Caco-2 (cell line): ENCODE measurements at regions of chr18 and their contacts with region 1.

Region 1: GRCh38 chr18:11310476-11311086 is 161.2 kb upstream of the PIEZO2 start:
- DNase-seq: peak; percentile 51 to 73
- H3K4me3 ChIP-seq: no peak overlapping the region
- H3K4me3 Mint-ChIP-seq: no peak overlapping the region
- H3K27ac Mint-ChIP-seq: no peak overlapping the region
- H3K4me1 ChIP-seq: peaks cover 8% of the 10 kb centered on the region; the same call in 1 of the 2 replicates
- H3K4me1 Mint-ChIP-seq: peaks cover 8% of the 10 kb centered on the region
- H3K27me3 ChIP-seq: no peaks in the 10 kb centered on the region
- H3K27me3 Mint-ChIP-seq: no peaks in the 10 kb centered on the region
- CTCF ChIP-seq: peak; percentile 81 to 84

Region 2: DNA sequence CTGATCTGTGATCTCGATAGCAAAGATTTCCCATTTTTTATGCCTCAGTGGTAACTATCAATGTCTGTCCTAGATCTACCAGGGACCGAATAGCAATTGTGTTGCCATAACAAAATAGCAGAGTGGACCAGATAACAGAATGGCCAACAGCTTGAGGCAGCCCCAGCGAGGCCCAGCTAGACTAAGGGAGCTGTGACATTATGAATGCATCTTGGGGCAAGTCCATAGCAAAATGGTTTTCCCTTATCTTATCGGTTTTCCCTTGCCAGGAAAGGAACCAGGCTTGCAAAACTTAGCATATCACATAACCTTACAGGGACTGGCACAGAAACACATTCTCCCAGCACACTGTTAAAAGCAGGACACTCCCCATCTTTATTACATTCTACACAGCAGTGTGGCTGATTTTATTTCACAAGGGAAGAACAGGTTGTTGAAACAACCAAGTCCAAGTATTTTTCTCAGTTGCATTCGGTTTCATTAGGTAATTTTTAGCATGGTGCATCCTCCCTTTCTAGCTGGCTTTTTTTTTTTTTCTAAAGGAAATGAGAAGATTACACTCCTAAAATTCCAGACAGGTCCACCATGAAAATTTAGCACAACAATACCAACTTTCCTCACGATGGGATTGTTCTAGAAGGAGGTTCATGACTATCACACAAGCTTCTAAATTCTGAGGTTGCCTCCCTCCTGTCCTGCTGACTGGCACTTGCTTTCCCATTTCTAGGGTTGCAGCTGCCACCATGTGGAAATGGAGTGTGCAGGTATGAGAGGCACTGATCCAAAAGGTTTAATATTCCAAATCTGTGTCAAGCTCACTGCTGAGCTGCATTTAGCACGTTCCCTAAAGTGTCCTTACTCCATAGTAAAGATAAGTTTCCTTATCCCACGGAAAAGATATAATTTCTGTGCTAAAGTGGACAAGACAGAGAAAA is 201.8 kb after region 1 on chr18:
- CTCF ChIA-PET with region 1: interaction called, 12 read pairs
- POLR2A ChIA-PET with region 1: no interaction called
- intact Hi-C with region 1: loop called (anchors 1 kb)
- DNase-seq: peak; percentile 49 to 52
- H3K4me3 ChIP-seq: no peak overlapping the region
- H3K4me3 Mint-ChIP-seq: no peak overlapping the region
- H3K27ac Mint-ChIP-seq: no peak overlapping the region
- H3K4me1 ChIP-seq: peaks cover 4% of the 10 kb centered on the region; the same call in 1 of the 2 replicates
- H3K4me1 Mint-ChIP-seq: no peaks in the 10 kb centered on the region
- H3K27me3 ChIP-seq: no peaks in the 10 kb centered on the region
- H3K27me3 Mint-ChIP-seq: no peaks in the 10 kb centered on the region
- CTCF ChIP-seq: peak in 1 of 2 experiments; percentile 61

Region 3: DNA sequence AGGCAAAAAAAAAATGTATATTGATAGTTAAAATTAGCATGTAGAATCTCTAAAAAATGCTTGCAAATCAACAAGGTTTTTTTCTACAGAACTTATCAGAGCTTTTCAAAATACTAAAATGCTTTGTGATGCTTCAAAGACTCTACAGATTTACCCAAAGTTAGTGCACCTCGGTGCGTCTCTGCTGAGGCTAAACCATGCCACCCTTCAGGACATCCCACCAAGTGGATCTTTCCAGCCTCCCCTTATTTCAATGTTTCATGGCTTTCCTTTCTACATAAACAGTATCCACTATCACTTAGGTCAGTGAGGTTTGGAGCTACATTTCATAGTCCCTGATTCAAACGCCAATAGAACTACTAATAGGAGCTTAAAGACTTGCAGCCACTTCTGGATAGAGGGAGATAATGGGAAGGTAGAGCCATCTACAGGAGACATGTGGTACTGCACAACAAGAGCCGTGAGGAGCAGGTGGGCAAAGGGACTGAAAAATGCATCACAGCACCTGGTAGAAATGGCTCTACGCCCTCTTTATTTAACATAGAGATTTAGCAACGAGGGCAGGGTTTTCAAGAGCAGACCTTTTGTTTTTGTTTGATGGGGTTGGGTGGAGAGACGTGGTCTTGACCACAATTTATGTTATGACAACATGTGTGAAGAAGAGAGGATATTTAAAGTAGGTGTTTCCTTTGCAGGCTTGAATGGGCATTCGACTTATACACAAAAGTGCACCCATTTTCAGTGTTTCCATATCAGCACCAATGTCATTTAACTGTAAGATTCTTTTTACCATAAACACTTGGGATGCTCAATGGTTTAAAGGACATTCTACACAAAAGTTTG is 242.7 kb after region 1 on chr18:
- CTCF ChIA-PET with region 1: interaction called, 14 read pairs
- POLR2A ChIA-PET with region 1: no interaction called
- intact Hi-C with region 1: loop called (anchors 1 kb)
- DNase-seq: peak; percentile 55 to 69
- H3K4me3 ChIP-seq: no peak overlapping the region
- H3K4me3 Mint-ChIP-seq: no peak overlapping the region
- H3K27ac Mint-ChIP-seq: no peak overlapping the region
- H3K4me1 ChIP-seq: no peaks in the 10 kb centered on the region
- H3K4me1 Mint-ChIP-seq: no peaks in the 10 kb centered on the region
- H3K27me3 ChIP-seq: no peaks in the 10 kb centered on the region; the same call in 1 of the 2 replicates
- H3K27me3 Mint-ChIP-seq: peaks cover 4% of the 10 kb centered on the region
- CTCF ChIP-seq: peak; percentile 87 to 89